ENCODE measurements at regions of chr1 and their contacts with region 1.

Region 1: GRCh38 chr1:222455188-222455879 is 92.6 kb downstream of the HHIPL2 start:
- DNase-seq: peak; percentile 81 to 94 (median 89)
- ATAC-seq: peak; percentile 95
- H3K4me3 ChIP-seq: no peak overlapping the region
- H3K27ac ChIP-seq: no peak overlapping the region
- H3K4me1 ChIP-seq: peaks cover 2% of the 10 kb centered on the region
- H3K27me3 ChIP-seq: no peaks in the 10 kb centered on the region

Region 2: DNA sequence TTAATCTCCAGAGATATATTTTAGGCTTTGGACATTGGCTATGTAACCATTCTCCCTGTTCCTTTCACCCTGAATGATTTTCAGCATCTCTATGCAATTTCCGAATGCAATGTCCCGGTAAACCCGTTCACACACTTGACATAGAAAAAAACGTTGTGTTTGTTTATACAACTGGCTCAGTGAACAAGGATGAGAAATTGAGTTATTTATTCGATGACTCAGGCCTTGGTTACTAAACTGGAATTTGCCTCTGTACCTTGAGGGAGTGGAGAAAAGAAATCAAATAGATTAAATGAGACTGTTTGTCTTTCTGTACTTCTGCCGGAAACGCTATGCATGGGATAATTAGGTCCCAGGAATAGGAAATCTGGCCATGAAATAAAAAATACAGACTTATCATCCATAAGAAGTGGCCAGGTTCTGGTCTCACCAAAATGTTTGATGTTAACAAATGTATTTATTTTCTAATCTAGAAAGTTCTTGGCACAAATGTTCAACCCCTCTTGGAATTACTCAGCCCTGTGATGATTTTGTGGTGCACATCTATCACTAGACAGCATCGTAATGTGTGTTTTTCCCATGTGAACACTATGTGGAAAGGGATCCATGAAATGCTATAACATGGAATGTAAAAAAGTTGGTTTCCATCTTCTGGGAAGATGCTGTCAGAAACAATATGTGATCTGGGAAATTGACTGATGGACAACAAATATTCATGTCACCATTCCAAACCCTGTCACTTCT is 967.4 kb before region 1 on chr1:
- intact Hi-C with region 1: loop called in 1 of 4 experiments (anchors 10 kb)
- DNase-seq: no peak
- ATAC-seq: no peak
- H3K4me3 ChIP-seq: no peak overlapping the region
- H3K27ac ChIP-seq: no peak overlapping the region
- H3K4me1 ChIP-seq: no peaks in the 10 kb centered on the region
- H3K27me3 ChIP-seq: no peaks in the 10 kb centered on the region

Region 3: GRCh38 chr1:221543529-221544120 is 911.7 kb before region 1 on chr1:
- intact Hi-C with region 1: loop called in 1 of 4 experiments (anchors 10 kb)
- DNase-seq: no peak
- ATAC-seq: no peak
- H3K4me3 ChIP-seq: no peak overlapping the region
- H3K27ac ChIP-seq: no peak overlapping the region
- H3K4me1 ChIP-seq: no peaks in the 10 kb centered on the region
- H3K27me3 ChIP-seq: no peaks in the 10 kb centered on the region

Region 4: GRCh38 chr1:221741711-221742554 is 713.4 kb before region 1 on chr1 and contains the start of gene DUSP10:
- intact Hi-C with region 1: loop called in 1 of 4 experiments (anchors 10 kb)
- DNase-seq: peak; percentile 98 to 99 (median 99)
- ATAC-seq: peak; percentile 97 to 98
- H3K4me3 ChIP-seq: peak within 1 kb of the TSS; percentile 72
- H3K27ac ChIP-seq: peak within 1 kb of the TSS; percentile 86
- H3K4me1 ChIP-seq: peaks cover 1% of the 10 kb centered on the region
- H3K27me3 ChIP-seq: no peaks in the 10 kb centered on the region
- total RNA-seq, gene DUSP10: 4.6 to 5.1 (median 4.9) TPM

Region 5: DNA sequence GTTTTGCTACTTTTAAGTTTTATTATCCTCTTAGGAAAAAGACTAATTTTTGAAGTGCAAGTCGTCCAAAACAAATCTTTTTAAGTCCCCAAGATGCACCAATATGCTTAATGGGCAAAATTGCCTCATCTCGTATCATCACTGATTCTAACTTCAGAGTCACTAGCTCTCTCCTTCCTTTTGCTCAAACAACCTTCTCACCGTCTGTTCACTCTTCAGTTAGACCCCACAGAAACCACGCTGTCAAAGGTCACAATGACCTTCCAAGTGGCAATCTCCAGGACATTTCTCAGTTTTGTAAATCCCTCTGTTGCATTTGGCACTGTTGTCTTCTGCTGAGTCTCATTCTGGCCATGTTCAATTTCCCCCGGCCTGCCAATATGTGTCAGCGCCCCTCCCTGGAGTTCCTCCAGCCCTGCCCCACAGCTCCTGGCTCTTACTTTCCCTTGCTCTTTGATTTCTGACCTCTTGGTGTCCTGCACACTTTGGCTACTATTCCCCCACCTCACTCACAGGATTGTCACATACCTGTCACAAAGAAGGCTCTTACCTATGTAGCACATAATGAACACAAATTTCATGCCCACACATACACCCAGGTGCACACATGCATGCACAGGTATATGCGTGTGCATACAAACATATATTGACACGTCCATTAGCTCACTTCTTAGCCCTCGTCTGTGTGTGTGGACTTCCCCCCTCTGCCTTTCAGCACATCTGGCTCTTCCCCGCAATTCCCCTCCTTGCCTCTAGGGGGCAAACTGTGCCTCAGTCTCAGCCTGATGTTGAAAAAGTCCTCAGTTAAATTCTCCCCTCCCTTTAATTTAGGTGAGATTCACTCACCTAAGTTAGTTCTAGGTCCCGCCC is 359.5 kb before region 1 on chr1:
- intact Hi-C with region 1: loop called in 1 of 4 experiments (anchors 10 kb)
- DNase-seq: peak in 2 of 3 donors; percentile 27 to 69
- ATAC-seq: peak in 1 of 2 donors; percentile 40
- H3K4me3 ChIP-seq: no peak overlapping the region
- H3K27ac ChIP-seq: no peak overlapping the region
- H3K4me1 ChIP-seq: no peaks in the 10 kb centered on the region
- H3K27me3 ChIP-seq: no peaks in the 10 kb centered on the region

Region 6: GRCh38 chr1:222420633-222421032 is 34.7 kb before region 1 on chr1:
- intact Hi-C with region 1: no loop called
- DNase-seq: no peak
- ATAC-seq: no peak
- H3K4me3 ChIP-seq: no peak overlapping the region
- H3K27ac ChIP-seq: no peak overlapping the region
- H3K4me1 ChIP-seq: no peaks in the 10 kb centered on the region
- H3K27me3 ChIP-seq: no peaks in the 10 kb centered on the region

Region 7: GRCh38 chr1:222589462-222590302 is 134.3 kb after region 1 on chr1 and contains the start of gene TAF1A:
- intact Hi-C with region 1: no loop called
- DNase-seq: peak; percentile 89 to 94 (median 93)
- ATAC-seq: peak; percentile 97 to 99
- H3K4me3 ChIP-seq: peak within 1 kb of the TSS; percentile 91
- H3K27ac ChIP-seq: peak within 1 kb of the TSS; percentile 80
- H3K4me1 ChIP-seq: peaks cover 3% of the 10 kb centered on the region
- H3K27me3 ChIP-seq: no peaks in the 10 kb centered on the region
- total RNA-seq, gene TAF1A: 3.1 to 5.2 (median 4.0) TPM

Measured in right cardiac atrium (tissue), 5 donors.